GM23248 (cell line): ENCODE measurements at regions of chr4 and their contacts with region 1.

Region 1: DNA sequence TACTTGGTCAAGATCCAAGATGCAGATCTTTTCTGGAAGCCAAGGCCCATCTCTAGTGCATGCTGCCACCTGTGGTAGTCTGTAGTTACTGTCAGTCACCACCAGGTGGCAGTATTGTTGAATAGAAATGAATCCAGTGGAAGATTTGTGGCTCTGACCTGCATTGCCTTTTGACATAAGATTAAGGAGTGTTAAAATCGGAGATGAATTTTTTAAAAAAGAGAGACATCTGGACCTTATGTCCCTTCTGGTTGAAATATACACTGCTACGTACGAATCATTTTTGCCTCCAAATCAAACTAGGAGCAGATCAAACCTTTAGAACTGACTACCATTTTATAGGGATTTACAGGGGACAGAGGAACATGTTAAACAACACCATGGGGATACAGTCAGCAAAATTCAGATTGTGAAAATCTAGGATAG is 46.9 kb upstream of the RHOH start:
- DNase-seq: peak; percentile 70
- H3K4me3 ChIP-seq: no peak overlapping the region
- H3K27ac ChIP-seq: no peak overlapping the region
- H3K4me1 ChIP-seq: no peaks in the 10 kb centered on the region
- H3K27me3 ChIP-seq: no peaks in the 10 kb centered on the region

Region 2: DNA sequence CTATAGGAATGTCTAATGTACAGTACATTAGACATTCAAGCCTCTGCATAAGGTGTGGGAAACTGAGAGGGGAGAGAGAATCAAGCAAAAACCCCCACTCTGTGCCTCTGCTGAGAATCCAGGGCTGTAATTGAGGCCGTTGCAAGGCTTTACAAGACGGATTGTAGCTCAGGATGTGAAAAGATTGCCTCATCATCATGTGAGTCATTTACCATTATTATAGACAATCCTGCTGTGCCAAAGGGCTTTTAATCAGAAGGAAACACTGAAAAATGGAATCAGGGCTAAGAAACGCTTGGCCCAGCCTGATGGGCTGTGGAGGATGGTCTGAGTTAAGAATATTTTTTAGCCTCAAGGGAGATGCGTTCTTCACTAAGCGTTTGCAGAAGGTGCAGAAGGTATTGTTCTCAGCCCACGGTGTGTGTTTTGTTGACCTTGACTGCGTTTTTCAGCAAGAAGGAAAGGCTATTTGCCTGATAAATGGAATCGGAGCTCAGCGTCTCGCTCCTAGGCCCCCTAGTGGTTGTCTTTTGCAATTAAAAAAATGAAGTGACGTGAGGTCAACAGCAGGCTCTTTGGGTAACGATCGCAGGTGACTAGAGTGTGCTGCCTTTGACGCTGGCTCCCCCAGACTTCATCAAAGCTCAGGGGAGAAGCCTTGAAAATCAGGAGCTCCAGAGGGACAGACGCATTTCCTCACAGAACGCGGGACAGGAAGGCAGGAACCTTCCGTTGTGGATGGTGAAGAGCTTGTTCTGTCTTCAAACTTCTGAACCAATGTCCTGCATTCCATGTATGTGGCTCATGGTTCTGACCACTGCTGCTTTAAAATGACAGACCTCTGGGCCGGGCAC is 167.0 kb after region 1 on chr4:
- in situ Hi-C with region 1: loop called (anchors 10 kb)
- DNase-seq: peak; percentile 96
- H3K4me3 ChIP-seq: peak overlapping the region; percentile 76
- H3K27ac ChIP-seq: peak overlapping the region; percentile 100
- H3K4me1 ChIP-seq: peaks cover 5% of the 10 kb centered on the region; the same call in 1 of the 2 replicates
- H3K27me3 ChIP-seq: no peaks in the 10 kb centered on the region

Region 3: GRCh38 chr4:40687676-40688389 is 537.9 kb after region 1 on chr4:
- in situ Hi-C with region 1: no loop called
- DNase-seq: no peak
- H3K4me3 ChIP-seq: no peak overlapping the region
- H3K27ac ChIP-seq: no peak overlapping the region
- H3K4me1 ChIP-seq: no peaks in the 10 kb centered on the region
- H3K27me3 ChIP-seq: no peaks in the 10 kb centered on the region

Region 4: DNA sequence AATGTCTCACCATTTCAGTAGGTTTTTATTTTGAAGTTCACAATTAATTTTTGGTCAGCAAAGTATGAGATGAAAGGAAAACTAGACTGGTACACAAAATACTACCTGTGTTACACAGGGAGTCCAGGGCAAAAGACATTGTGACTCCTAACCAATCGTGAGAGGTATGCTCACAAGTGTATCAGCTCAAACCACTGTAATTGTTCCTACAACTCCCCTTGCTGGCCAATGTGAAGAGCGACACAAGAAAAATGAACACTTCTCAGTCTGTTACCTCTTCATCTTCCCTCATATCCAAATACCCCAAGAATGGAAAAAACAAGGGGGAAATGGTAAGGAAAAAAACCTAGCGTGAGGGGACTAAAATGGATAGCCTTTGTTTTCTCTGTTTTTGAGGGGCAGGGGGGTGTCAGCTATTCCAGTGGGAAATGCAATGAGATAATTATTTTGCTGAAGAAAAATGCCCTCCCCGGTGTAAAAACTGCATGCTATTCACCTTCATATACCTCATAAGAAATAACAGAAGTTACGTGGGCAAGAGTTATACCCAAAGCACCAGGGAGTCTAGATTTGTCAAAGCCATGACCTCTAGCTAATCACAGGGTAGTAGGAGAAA is 569.1 kb after region 1 on chr4:
- in situ Hi-C with region 1: loop called (anchors 25 kb)
- DNase-seq: peak; percentile 63
- H3K4me3 ChIP-seq: no peak overlapping the region
- H3K27ac ChIP-seq: no peak overlapping the region
- H3K4me1 ChIP-seq: no peaks in the 10 kb centered on the region
- H3K27me3 ChIP-seq: no peaks in the 10 kb centered on the region; the same call in 1 of the 2 replicates